ENCODE measurements at regions of chr11 and their contacts with region 1.

Region 1: GRCh38 chr11:78432058-78432515 is 14.5 kb upstream of the GAB2 start:
- DNase-seq: peak in 2 of 3 donors; percentile 31 to 48
- H3K4me3 ChIP-seq: no peak overlapping the region
- H3K4me3 Mint-ChIP-seq: no peak overlapping the region
- H3K27ac ChIP-seq: no peak overlapping the region
- H3K27ac Mint-ChIP-seq: peak overlapping the region in 2 of 7 donors; percentile 35 to 68
- H3K4me1 ChIP-seq: peaks cover 24 to 27% of the 10 kb centered on the region in 2 donors
- H3K4me1 Mint-ChIP-seq: peaks cover 30% of the 10 kb centered on the region
- H3K27me3 ChIP-seq: no peaks in the 10 kb centered on the region
- H3K27me3 Mint-ChIP-seq: no peaks in the 10 kb centered on the region
- CTCF ChIP-seq: peak; percentile 77

Region 2: GRCh38 chr11:78228467-78228866 is 203.6 kb before region 1 on chr11:
- intact Hi-C with region 1: loop called in 1 of 2 experiments (anchors 10 kb)
- DNase-seq: peak; percentile 48 to 60 (median 56)
- H3K4me3 ChIP-seq: no peak overlapping the region
- H3K4me3 Mint-ChIP-seq: no peak overlapping the region
- H3K27ac ChIP-seq: peak overlapping the region in 1 of 2 donors; percentile 23
- H3K27ac Mint-ChIP-seq: peak overlapping the region in 2 of 7 donors; percentile 55 to 71
- H3K4me1 ChIP-seq: peaks cover 8 to 9% of the 10 kb centered on the region in 2 donors
- H3K4me1 Mint-ChIP-seq: peaks cover 37% of the 10 kb centered on the region
- H3K27me3 ChIP-seq: no peaks in the 10 kb centered on the region
- H3K27me3 Mint-ChIP-seq: no peaks in the 10 kb centered on the region
- CTCF ChIP-seq: peak; percentile 68

Region 3: GRCh38 chr11:78244546-78245255 is 187.4 kb before region 1 on chr11:
- intact Hi-C with region 1: no loop called
- DNase-seq: no peak
- H3K4me3 ChIP-seq: no peak overlapping the region
- H3K4me3 Mint-ChIP-seq: no peak overlapping the region
- H3K27ac ChIP-seq: peak overlapping the region in 1 of 2 donors; percentile 52
- H3K27ac Mint-ChIP-seq: peak overlapping the region in 5 of 7 donors; percentile 5 to 89 (median 25)
- H3K4me1 ChIP-seq: peaks cover 0 to 6% of the 10 kb centered on the region in 2 donors
- H3K4me1 Mint-ChIP-seq: peaks cover 11% of the 10 kb centered on the region
- H3K27me3 ChIP-seq: no peaks in the 10 kb centered on the region
- H3K27me3 Mint-ChIP-seq: no peaks in the 10 kb centered on the region
- CTCF ChIP-seq: no peak

Region 4: DNA sequence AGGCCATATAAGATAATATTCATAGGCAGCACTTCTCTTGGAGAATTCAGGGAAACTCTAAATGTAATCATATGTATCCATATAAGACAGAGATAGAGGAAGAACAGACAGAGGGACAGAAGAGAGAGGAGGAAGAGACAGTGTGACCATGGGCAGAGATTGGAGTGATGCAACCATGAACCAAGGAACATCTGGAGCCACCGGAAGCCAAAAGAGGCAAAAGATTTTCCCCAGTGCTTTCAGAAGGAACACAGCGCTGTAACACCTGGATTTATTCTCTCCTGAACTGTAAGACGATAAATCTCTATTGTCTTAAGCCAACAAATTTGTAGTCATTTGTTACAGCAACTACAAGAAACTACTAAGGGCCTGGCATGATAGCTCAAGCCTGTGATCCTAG is 72.2 kb before region 1 on chr11:
- intact Hi-C with region 1: no loop called
- DNase-seq: no peak
- H3K4me3 ChIP-seq: peak overlapping the region in 1 of 3 experiments; percentile 11
- H3K4me3 Mint-ChIP-seq: peak overlapping the region in 1 of 2 donors; percentile 9
- H3K27ac ChIP-seq: peak overlapping the region in 1 of 2 donors; percentile 51
- H3K27ac Mint-ChIP-seq: peak overlapping the region; percentile 27 to 81 (median 68)
- H3K4me1 ChIP-seq: peaks cover 32 to 50% of the 10 kb centered on the region in 2 donors
- H3K4me1 Mint-ChIP-seq: peaks cover 71% of the 10 kb centered on the region
- H3K27me3 ChIP-seq: no peaks in the 10 kb centered on the region
- H3K27me3 Mint-ChIP-seq: no peaks in the 10 kb centered on the region
- CTCF ChIP-seq: no peak

Region 5: GRCh38 chr11:78370406-78371172 is 61.5 kb before region 1 on chr11:
- intact Hi-C with region 1: loop called in 1 of 2 experiments (anchors 10 kb)
- DNase-seq: no peak
- H3K4me3 ChIP-seq: no peak overlapping the region
- H3K4me3 Mint-ChIP-seq: no peak overlapping the region
- H3K27ac ChIP-seq: peak overlapping the region in 1 of 2 donors; percentile 37
- H3K27ac Mint-ChIP-seq: peak overlapping the region in 5 of 7 donors; percentile 10 to 71 (median 51)
- H3K4me1 ChIP-seq: peaks cover 15 to 35% of the 10 kb centered on the region in 2 donors
- H3K4me1 Mint-ChIP-seq: peaks cover 37% of the 10 kb centered on the region
- H3K27me3 ChIP-seq: no peaks in the 10 kb centered on the region
- H3K27me3 Mint-ChIP-seq: no peaks in the 10 kb centered on the region
- CTCF ChIP-seq: no peak

Region 6: DNA sequence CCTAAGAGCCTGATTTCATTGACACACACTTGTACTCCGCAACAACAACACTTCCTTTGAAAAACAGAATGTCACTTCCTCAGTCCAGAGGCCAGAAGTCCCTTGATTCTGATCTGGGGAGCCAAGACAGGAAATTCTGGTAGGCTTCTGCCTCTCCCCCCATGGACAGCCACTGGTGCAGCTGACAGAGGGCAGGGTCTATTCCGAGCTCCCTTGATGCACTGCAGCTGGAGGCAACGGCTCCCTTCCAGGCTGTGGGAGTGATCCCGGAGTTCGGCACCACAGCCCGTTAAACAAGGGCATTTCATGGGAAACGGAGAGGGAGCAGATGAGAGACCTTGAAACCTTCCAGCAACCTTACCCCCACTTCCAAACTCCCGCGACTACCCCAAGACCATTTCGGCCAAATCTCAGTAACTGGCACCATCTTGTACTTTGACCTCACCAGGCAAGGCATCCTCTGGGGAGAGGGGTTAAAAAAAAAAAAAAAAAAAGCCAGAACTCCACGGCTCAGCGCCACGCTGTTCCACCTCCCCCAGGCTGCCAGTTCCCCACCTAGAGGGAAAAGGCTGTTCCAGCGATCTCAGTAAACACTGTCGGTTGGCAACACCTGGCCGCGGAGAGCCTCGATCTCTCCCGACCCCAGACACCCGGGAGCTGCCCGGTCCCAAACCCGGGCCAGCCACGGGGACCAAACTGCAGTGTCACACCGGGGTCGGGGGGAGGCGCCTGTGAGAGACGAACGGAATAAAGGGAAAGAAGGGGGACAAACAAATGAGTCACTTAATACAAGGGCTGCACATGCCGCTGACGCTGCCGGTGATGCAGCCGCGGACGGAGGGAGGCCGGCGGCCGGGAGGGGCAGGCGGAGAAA is 15.5 kb before region 1 on chr11:
- intact Hi-C with region 1: loop called in 1 of 2 experiments (anchors 2 kb)
- DNase-seq: peak; percentile 91 to 95 (median 95)
- H3K4me3 ChIP-seq: peak overlapping the region; percentile 47 to 94 (median 84)
- H3K4me3 Mint-ChIP-seq: peak overlapping the region; percentile 95 to 96
- H3K27ac ChIP-seq: peak overlapping the region; percentile 98 to 100
- H3K27ac Mint-ChIP-seq: peak overlapping the region; percentile 98 to 100 (median 99)
- H3K4me1 ChIP-seq: peaks cover 70 to 80% of the 10 kb centered on the region in 2 donors
- H3K4me1 Mint-ChIP-seq: peaks cover 74% of the 10 kb centered on the region
- H3K27me3 ChIP-seq: no peaks in the 10 kb centered on the region
- H3K27me3 Mint-ChIP-seq: peaks cover 0 to 8% (median 0%) of the 10 kb centered on the region in 3 donors
- CTCF ChIP-seq: peak; percentile 59

Measured in CD14-positive monocyte (primary cell).